ENCODE measurements at regions of chr7 and their contacts with region 1.

Region 1: GRCh38 chr7:98021588-98022351 is 31.8 kb upstream of the OCM2 start:
- DNase-seq: peak; percentile 37
- ATAC-seq: peak; percentile 94
- H3K4me3 ChIP-seq: no peak overlapping the region
- H3K27ac ChIP-seq: no peak overlapping the region
- H3K4me1 ChIP-seq: no peaks in the 10 kb centered on the region
- H3K27me3 ChIP-seq: peaks cover 2% of the 10 kb centered on the region; the same call in 1 of the 2 replicates
- CTCF ChIP-seq: peak; percentile 90
- POLR2A ChIP-seq: no peak
- RAD21 ChIP-seq: peak; percentile 91

Region 2: DNA sequence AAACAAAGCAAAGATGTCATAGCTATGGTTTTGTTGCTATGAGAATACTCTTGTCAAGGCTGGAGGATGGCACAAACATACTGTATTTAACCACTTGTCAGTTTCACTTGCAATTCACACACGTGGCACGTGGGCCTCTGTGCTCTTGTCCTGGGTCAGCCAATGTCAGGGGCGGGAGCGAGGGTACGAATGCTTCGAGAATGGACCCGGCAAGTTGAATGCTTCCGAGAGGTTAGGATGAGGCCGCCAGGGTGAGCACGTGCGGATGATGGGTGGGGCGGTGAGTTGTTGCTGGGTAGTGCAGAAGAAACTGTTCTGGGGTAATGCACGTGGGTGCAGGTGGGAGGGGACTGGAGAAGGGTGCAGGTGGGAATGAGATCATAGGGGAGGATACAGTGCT is 21.4 kb before region 1 on chr7:
- CTCF ChIA-PET with region 1: no interaction called
- POLR2A ChIA-PET with region 1: no interaction called
- dilution Hi-C with region 1: no loop called
- in situ Hi-C with region 1: no loop called
- intact Hi-C with region 1: no loop called
- DNase-seq: no peak
- ATAC-seq: no peak
- H3K4me3 ChIP-seq: no peak overlapping the region
- H3K27ac ChIP-seq: no peak overlapping the region
- H3K4me1 ChIP-seq: no peaks in the 10 kb centered on the region
- H3K27me3 ChIP-seq: no peaks in the 10 kb centered on the region
- CTCF ChIP-seq: no peak
- POLR2A ChIP-seq: no peak
- RAD21 ChIP-seq: no peak

Region 3: GRCh38 chr7:98106647-98107445 is 85.1 kb after region 1 on chr7 and contains the start of gene LMTK2:
- CTCF ChIA-PET with region 1: no interaction called
- POLR2A ChIA-PET with region 1: no interaction called
- dilution Hi-C with region 1: no loop called
- in situ Hi-C with region 1: no loop called
- intact Hi-C with region 1: loop called (anchors 5 kb)
- DNase-seq: peak; percentile 86
- ATAC-seq: peak; percentile 100
- H3K4me3 ChIP-seq: peak within 1 kb of the TSS; percentile 87
- H3K27ac ChIP-seq: peak within 1 kb of the TSS; percentile 55
- H3K4me1 ChIP-seq: no peaks in the 10 kb centered on the region
- H3K27me3 ChIP-seq: no peaks in the 10 kb centered on the region
- CTCF ChIP-seq: peak; percentile 98
- POLR2A ChIP-seq: peak; percentile 73
- RAD21 ChIP-seq: peak; percentile 72
- total RNA-seq, gene LMTK2: 5.0 and 5.3 TPM in 2 replicates

Region 4: DNA sequence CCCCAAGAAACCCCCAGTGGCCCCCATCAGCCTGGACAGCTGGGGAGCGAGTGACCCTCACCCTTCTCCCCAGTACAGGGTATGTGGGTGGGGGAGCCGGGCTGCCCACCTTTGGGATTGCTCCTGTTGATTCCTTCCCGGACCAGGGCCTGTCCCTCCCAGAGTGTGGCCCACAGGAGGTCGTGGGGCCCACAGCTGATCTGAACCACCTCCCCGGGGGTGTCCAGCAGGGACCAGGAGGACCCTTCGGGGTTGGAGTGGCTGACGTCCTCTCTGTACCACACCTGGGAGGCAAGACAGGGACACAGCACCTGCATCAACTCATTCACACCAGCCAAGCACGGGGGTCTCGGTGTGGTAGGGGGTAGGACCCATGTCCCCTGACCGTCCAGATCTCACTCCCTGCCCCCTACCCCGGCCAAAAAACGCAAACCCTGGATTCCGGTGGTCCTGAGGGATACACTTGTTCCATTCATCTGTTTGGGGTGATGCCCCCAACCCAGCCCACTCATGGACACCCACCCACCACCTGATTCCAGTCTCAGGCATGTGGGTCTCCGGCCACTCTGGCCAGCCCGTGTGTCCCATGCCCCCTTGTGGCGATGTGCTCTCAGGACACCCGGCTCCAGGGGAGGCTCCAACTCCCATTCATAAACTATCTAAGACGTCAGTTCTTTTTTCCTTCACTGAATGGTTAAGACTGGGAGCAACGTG is 219.3 kb after region 1 on chr7:
- CTCF ChIA-PET with region 1: interaction called, 3 read pairs
- POLR2A ChIA-PET with region 1: no interaction called
- dilution Hi-C with region 1: no loop called
- in situ Hi-C with region 1: loop called (anchors 10 kb)
- intact Hi-C with region 1: loop called (anchors 1 kb)
- DNase-seq: peak; percentile 28
- ATAC-seq: peak; percentile 95
- H3K4me3 ChIP-seq: no peak overlapping the region
- H3K27ac ChIP-seq: no peak overlapping the region
- H3K4me1 ChIP-seq: no peaks in the 10 kb centered on the region
- H3K27me3 ChIP-seq: no peaks in the 10 kb centered on the region
- CTCF ChIP-seq: peak; percentile 69
- POLR2A ChIP-seq: no peak
- RAD21 ChIP-seq: peak; percentile 62

Region 5: GRCh38 chr7:98372993-98373392 is 351.2 kb after region 1 on chr7:
- CTCF ChIA-PET with region 1: no interaction called
- POLR2A ChIA-PET with region 1: no interaction called
- dilution Hi-C with region 1: no loop called
- in situ Hi-C with region 1: no loop called
- intact Hi-C with region 1: no loop called
- DNase-seq: peak; percentile 81
- ATAC-seq: no peak
- H3K4me3 ChIP-seq: no peak overlapping the region
- H3K27ac ChIP-seq: no peak overlapping the region
- H3K4me1 ChIP-seq: peaks cover 2% of the 10 kb centered on the region; the same call in 1 of the 2 replicates
- H3K27me3 ChIP-seq: no peaks in the 10 kb centered on the region
- CTCF ChIP-seq: no peak
- POLR2A ChIP-seq: no peak
- RAD21 ChIP-seq: no peak

Region 6: DNA sequence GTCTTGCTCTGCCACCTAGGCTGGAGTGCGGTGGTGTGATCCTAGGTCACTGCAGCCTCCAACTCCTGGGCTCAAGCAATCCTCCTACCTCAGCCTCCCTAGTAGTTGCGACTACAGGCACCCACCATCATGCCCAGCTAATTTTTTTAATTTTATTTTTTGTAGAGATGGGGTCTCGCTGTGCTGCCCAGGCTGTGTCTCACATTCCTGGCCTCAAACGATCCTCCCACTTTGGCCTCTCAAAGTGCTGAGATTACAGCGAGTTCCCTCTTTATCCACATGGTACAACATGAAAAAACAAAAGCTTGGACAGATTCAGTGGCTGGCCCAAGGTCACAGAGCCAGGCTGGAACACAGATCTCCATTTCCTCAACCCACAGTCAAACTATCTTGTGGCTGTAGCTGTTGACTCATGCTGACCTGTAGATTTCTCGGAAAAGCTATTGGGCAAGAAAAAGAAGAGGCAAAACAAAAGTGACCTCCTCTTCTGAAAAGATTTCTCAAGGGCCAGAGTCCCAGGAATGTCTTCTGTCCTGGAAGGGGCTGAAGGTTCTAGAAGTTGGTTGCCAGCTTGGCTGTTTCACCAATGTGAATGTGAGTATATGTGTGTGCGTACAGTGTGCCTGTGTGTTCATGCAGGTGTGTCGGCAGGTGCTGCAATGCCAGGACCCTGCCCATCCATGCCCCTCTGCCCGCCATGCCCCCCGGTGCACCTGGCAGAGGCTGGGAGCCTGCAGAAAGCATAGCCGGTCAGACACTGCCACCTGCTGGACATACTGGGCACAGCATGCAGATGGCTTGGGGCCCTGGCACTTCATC is 819.6 kb after region 1 on chr7:
- CTCF ChIA-PET with region 1: interaction called, 4 read pairs
- POLR2A ChIA-PET with region 1: no interaction called
- dilution Hi-C with region 1: no loop called
- in situ Hi-C with region 1: no loop called
- intact Hi-C with region 1: loop called (anchors 5 kb)
- DNase-seq: peak; percentile 85
- ATAC-seq: peak; percentile 88
- H3K4me3 ChIP-seq: no peak overlapping the region
- H3K27ac ChIP-seq: peak overlapping the region; percentile 26; the same call in 1 of the 2 replicates
- H3K4me1 ChIP-seq: peaks cover 5% of the 10 kb centered on the region; the same call in 1 of the 2 replicates
- H3K27me3 ChIP-seq: no peaks in the 10 kb centered on the region; the same call in 1 of the 2 replicates
- CTCF ChIP-seq: peak; percentile 90
- POLR2A ChIP-seq: no peak
- RAD21 ChIP-seq: peak; percentile 93

Measured in IMR-90 (cell line).